Activated B cell treated with CpG ODN at 0.5 μM for 24 hours (primary cell): ENCODE measurements at regions of chr7 and their contacts with region 1.

Region 1: DNA sequence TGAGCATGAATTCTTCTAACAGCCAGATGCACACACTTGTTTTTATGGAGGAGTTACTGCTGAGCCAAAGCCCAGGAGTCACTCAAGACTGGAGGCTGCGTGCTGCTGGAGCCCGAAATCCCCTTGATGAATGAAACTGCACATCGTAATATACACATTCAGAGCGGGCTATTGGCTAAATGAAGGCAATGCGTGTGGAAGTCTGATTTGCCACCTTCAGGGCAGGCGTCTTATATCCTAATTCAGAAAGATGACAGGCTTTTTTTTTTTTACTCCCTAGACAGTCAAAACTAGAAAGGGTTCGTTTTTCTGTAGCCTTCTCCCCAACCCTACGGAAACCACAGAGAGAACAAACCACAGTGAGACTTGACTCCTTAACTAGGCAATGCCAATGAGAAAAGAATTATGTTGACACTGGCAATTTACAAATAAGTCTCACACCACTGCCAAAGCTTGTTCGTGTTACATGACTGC is 227.2 kb upstream of the KLF14 start:
- DNase-seq: peak; percentile 54
- ATAC-seq: peak; percentile 78
- H3K4me3 Mint-ChIP-seq: peak overlapping the region; percentile 87
- H3K27ac Mint-ChIP-seq: peak overlapping the region; percentile 98
- H3K4me1 Mint-ChIP-seq: peaks cover 69% of the 10 kb centered on the region
- H3K27me3 Mint-ChIP-seq: no peaks in the 10 kb centered on the region
- CTCF ChIP-seq: no peak

Region 2: DNA sequence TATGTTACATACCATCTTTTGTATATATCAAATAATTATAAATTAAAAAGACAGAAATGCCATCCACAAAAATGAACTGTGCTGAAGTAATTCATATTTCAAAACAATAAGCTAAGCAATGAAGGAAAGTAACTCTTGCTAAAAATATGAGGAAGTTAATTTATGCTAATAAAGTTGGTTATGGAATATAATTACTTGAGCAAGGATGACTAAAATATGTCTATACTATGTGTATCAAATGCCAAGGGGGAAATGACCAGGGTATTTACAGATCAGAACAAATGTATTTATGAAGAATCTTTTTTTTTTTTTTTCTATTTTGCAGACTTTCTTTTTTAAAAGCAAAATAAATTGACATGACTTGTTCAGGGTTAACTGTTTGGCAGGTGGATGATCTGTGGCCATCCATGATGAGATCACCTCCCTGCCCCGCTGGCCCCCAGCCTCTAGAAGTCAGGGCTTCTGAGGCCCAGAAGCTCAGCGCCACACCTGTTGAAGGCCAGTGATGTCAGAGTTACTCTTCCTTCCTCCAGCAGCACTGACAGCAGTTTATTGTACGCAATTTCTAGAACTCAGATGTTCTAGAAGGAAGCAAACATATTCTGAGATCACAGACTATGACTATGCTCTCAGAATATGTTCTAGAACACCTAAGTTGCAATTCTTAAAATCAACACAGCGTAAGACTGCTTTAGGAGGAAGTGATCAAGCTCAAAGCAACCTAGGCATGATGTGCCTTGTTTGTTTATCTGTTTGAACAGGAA is 31.1 kb before region 1 on chr7:
- CTCF ChIA-PET with region 1: interaction called, 3 read pairs
- POLR2A ChIA-PET with region 1: interaction called, 4 read pairs
- intact Hi-C with region 1: loop called (anchors 1 kb)
- DNase-seq: no peak
- ATAC-seq: peak; percentile 57
- H3K4me3 Mint-ChIP-seq: no peak overlapping the region
- H3K27ac Mint-ChIP-seq: peak overlapping the region; percentile 74
- H3K4me1 Mint-ChIP-seq: peaks cover 80% of the 10 kb centered on the region
- H3K27me3 Mint-ChIP-seq: no peaks in the 10 kb centered on the region
- CTCF ChIP-seq: no peak

Region 3: DNA sequence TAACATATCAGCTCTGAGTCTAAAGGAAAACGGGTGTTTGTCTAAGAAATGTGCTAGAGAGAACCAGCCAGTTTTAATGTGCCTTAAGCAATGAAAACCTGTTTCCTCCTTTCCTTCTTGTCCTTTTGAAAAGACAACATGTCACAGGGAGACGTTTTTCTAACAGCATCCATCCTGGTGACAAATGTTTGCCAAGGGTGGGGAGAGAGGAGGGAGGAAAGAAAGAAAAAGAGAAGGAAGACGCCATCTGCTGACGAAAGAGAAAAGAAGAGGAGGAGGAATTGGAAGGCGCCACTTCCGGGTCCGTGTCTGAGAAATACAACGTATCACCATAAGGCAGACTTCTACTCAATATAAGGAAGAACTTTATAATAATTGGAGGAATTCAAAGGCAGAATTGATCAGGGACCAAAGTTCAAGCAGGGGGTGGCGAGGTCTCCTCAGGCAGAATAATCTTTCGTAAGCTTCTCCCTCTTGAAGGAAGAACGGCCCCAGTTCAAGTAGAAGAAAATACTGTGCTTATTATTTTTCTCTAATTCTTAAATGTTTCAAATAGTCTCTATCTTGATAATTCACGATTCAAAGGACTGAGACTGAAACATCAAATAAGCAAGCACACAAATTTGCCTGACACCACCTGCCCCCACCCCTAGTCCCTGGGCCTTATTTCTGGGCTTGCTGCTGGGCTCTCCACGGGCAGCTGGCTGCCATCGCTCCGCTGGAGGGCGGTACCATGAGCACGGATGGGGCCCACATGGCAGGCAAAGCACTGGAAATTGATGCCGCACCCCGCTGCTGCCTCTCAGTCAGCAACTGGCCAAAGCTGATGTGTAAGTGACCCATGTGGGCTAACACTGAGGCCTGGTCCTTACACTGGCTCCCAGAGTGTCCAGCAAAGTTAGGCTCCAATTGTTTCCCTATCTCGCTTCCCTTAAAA is 46.5 kb after region 1 on chr7:
- CTCF ChIA-PET with region 1: interaction called, 9 read pairs
- POLR2A ChIA-PET with region 1: interaction called, 8 read pairs
- intact Hi-C with region 1: loop called (anchors 1 kb)
- DNase-seq: no peak
- ATAC-seq: peak; percentile 64
- H3K4me3 Mint-ChIP-seq: peak overlapping the region; percentile 46
- H3K27ac Mint-ChIP-seq: peak overlapping the region; percentile 89
- H3K4me1 Mint-ChIP-seq: peaks cover 88% of the 10 kb centered on the region
- H3K27me3 Mint-ChIP-seq: no peaks in the 10 kb centered on the region
- CTCF ChIP-seq: no peak

Region 4: GRCh38 chr7:131040467-131040932 is 79.3 kb after region 1 on chr7:
- CTCF ChIA-PET with region 1: interaction called, 8 read pairs
- POLR2A ChIA-PET with region 1: interaction called, 20 read pairs
- intact Hi-C with region 1: loop called (anchors 1 kb)
- DNase-seq: no peak
- ATAC-seq: peak; percentile 75
- H3K4me3 Mint-ChIP-seq: peak overlapping the region; percentile 60
- H3K27ac Mint-ChIP-seq: peak overlapping the region; percentile 81
- H3K4me1 Mint-ChIP-seq: peaks cover 56% of the 10 kb centered on the region
- H3K27me3 Mint-ChIP-seq: no peaks in the 10 kb centered on the region
- CTCF ChIP-seq: peak; percentile 61

Region 5: DNA sequence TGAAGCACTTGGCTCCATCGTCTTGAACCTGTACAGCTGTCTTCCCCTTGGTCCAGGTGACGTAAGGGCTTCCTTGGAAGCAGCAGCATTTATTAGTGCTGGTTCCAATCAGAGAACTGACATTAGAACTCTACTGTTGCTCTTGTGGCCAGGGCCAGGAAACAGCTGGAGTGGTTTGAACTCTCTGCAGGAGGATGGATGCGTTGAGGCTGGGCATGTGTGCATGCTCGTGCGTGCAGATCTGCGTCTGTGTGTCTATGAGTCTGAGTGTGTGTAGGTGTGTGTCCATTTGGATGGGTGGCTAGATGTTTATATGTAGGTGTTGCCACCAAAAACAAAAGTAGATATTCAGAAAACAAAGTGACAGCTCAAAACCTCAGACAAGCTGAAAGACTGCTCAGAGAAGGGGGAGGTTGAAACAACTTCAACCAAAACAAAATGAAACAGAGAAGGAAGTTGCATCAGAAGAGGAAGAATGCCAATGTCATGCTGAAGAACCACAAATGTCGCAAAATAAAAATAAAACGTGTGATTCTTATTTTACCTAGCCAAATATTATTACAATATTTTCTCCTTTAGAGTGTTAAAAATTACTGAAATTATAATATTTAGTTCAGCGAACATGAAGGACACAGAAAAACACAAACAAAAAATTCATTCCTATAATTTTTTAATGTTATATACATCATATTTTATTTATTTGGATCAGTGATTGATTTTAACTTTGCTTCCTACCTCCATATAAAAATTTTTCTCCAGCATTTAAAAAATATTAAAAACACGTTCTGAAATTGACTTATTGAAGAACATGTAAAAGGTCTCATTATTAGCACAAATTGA is 270.4 kb after region 1 on chr7:
- CTCF ChIA-PET with region 1: no interaction called
- POLR2A ChIA-PET with region 1: no interaction called
- intact Hi-C with region 1: loop called (anchors 1 kb)
- DNase-seq: peak; percentile 31
- ATAC-seq: peak; percentile 73
- H3K4me3 Mint-ChIP-seq: peak overlapping the region; percentile 82
- H3K27ac Mint-ChIP-seq: peak overlapping the region; percentile 97
- H3K4me1 Mint-ChIP-seq: peaks cover 29% of the 10 kb centered on the region
- H3K27me3 Mint-ChIP-seq: no peaks in the 10 kb centered on the region
- CTCF ChIP-seq: no peak

Region 6: GRCh38 chr7:131654668-131655326 is 693.6 kb after region 1 on chr7:
- CTCF ChIA-PET with region 1: no interaction called
- POLR2A ChIA-PET with region 1: no interaction called
- intact Hi-C with region 1: no loop called
- DNase-seq: peak; percentile 81
- ATAC-seq: peak; percentile 89
- H3K4me3 Mint-ChIP-seq: no peak overlapping the region
- H3K27ac Mint-ChIP-seq: no peak overlapping the region
- H3K4me1 Mint-ChIP-seq: no peaks in the 10 kb centered on the region
- H3K27me3 Mint-ChIP-seq: no peaks in the 10 kb centered on the region
- CTCF ChIP-seq: peak; percentile 74